Right ventricle myocardium inferior (tissue), 1 donor: ENCODE measurements at regions of chr5 and their contacts with region 1.

Region 1: GRCh38 chr5:144203750-144204596 is 33.3 kb downstream of the KCTD16 start:
- DNase-seq: no peak
- ATAC-seq: peak; percentile 60

Region 2: DNA sequence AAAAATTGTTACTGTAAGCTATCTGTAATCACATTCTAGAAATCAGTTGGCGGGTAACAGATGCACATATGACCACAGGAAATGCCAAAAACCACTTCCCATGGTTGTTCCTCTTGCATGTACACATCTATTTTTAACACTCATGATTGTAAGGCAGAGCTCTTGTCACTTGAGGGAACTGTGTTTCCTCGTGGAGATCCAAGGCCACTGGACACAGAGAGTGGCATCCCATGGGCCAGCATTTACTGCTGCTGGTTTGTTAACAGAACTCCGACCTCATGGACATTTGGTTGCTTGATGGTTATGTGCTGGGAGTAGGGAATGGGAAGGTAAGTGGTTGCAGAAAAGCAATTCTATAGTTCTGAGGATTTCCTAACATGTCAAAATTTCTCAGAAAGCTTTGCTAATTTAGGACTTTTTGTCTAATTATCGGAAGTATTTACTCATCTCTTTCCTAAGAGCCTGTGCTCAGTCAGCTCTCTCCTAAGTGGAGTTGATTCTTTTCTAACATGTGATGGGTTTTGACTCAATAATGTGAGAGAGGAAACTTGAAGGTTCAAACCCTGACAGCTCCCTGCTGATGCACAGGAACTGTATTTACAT is 598.5 kb before region 1 on chr5:
- intact Hi-C with region 1: no loop called
- DNase-seq: no peak
- ATAC-seq: peak; percentile 53

Region 3: DNA sequence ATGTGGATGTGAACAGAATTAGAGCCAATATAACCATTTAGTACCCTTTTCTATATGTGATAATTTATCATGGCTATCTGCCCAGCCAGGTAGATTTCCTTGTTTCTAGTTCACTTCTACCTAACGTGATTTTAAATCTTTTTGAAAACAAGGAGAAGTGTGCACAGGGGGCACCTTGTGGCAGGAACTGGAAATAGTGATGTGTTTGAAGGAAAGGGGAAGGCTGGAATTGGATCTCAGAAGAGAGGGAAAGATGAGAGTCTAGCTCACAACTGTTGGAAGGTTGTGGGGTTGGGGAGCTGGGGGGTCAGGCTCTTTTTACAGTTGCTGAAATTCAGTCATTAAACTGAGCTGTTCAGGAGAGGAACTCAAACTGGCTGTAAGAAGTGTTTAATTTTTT is 186.2 kb after region 1 on chr5:
- intact Hi-C with region 1: loop called (anchors 2 kb)
- DNase-seq: no peak
- ATAC-seq: no peak

Region 4: DNA sequence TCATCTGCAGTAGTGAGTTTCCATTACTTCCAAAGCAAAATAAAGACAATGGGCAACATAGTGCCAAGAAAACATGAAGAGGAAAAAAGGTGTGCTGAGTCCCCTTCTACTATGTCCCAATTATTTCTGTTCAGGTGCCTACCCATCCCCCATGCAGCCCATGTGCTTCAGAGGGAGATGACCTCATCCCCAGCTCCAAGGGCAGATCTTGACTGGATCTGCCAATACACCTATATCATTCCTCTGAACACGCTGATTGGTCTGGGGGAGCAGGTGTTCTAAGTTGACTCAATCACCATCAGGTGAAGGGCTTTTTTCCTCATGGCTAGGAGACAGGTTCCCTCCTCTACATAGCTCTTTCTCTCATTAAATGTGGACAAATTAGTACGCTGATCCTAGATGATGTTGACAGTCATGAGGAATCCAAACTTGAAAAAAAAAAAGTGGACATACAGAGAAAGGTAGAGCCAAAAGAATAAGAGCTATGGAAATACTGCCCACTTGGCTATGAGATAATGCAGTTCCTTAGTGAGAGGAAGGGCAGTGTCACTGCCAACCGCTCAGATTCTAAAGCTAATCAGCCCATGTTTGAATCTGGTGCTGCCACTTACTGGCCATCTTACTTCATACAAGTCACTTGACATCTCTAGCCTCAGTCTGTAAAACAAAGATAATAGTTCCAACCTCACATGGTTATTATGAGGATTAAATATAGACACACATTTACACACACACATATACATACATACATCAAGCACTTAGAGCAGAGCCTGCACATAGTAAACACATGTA is 1608.1 kb after region 1 on chr5:
- intact Hi-C with region 1: loop called (anchors 10 kb)
- DNase-seq: no peak
- ATAC-seq: peak; percentile 75

Region 5: DNA sequence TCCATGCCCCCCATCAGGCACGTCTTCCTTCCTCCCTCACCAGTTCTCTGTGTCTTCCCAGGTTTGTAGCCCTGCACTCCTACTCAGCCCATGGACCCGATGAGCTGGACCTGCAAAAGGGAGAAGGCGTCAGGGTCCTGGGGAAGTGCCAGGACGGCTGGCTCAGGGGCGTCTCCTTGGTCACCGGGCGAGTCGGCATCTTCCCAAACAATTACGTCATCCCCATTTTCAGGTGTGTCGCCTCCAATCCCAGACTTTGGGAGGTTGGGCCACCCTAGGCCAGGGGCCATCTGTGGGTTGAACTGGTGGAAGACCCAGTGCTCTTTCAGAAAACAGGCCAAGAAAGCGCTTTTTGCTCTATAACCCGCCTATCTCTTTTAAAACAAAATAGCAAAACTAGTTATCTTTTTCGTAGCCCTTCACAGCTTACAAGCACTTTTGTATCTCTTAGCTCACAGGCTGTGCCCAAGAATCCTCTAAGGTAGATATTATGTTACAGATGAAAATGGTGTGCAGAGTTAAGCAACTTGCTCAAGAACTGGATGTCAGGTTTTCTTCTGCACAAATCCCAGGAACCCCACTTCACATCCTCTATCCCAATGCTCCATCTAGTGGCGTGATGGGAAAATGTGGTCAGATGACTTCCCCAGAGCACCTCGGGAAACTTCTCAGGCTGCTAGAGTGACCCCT is 1845.2 kb after region 1 on chr5:
- intact Hi-C with region 1: loop called (anchors 10 kb)
- DNase-seq: no peak
- ATAC-seq: peak; percentile 40

Region 6: DNA sequence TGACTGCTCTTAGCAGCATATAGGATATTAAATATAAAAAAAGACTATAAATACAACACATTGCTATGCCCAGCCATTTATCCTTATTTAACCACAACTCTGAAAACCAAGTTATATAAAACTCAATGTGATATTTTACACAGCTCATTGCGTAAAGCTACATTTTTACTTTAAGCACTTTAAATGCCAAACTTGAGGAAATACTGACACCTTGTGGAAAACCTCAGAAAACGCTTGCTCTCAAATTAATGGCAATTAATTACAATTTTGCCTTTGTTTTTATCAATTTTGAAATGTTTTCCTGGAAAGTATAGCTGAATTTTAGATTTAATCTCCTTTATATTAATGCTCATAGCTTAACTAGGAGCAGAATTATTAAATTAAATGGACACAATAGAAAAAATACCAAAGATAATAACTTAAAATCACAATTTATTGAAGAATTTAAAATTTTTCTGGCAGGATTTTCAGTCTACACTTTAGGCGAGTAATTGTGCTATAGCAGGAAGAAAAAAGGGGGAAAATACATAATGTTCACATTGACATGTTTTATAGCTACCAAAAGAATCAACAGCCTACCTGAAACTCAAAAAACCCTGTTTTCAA is 1926.6 kb after region 1 on chr5:
- intact Hi-C with region 1: loop called (anchors 10 kb)
- DNase-seq: no peak
- ATAC-seq: no peak